Activated naive CD4-positive, alpha-beta T cell treated with anti-CD3 and anti-CD28 coated beads for 36 hours (primary cell): ENCODE measurements at regions of chr14 and their contacts with region 1.

Region 1: DNA sequence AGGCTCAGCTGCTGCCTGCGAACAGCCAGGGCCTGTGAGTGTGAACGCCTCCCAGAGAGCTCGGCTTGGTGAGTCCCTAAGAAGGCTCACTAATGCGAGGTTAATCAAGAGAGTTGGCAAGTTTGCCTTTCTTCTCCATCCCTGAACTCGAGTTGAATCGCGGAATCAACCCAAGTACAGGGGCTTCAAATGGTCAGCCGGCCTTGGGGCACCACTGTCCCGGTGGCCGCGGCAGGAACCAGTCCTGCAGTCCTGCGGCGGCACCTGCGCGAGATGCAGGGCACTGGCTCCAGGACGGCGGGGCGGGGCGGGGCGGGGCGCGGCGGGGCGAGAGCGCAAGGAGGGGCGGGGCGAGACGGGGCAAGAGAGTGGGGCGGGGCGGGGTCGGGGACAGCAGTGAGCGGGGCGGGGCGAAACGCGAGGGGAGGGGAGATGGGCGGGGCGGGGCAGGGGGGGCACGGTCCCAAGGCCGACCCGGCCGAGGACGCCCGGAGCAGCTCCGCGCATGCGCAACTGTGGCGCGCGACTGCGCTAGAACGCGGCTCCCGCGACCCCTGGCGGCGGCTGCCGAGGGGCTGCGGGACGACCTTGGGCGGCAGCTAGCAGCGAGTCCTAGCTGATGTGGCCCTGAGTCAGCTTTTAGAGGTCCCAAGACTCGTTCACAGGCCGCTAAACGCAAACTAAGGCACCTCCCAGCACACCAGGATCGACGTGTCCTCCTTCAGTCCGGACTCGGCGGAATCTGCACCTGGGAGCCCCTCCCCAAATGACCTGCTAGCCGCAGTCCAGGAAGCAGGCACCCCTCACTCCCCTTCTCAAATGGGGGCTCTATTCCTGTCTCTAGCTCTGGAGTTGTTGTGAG is 58.0 kb downstream of the TTC7B start:
- DNase-seq: peak; percentile 92
- H3K4me3 Mint-ChIP-seq: peak overlapping the region; percentile 76
- H3K27ac Mint-ChIP-seq: peak overlapping the region; percentile 80
- H3K4me1 Mint-ChIP-seq: peaks cover 14% of the 10 kb centered on the region
- H3K27me3 Mint-ChIP-seq: peaks cover 2% of the 10 kb centered on the region

Region 2: DNA sequence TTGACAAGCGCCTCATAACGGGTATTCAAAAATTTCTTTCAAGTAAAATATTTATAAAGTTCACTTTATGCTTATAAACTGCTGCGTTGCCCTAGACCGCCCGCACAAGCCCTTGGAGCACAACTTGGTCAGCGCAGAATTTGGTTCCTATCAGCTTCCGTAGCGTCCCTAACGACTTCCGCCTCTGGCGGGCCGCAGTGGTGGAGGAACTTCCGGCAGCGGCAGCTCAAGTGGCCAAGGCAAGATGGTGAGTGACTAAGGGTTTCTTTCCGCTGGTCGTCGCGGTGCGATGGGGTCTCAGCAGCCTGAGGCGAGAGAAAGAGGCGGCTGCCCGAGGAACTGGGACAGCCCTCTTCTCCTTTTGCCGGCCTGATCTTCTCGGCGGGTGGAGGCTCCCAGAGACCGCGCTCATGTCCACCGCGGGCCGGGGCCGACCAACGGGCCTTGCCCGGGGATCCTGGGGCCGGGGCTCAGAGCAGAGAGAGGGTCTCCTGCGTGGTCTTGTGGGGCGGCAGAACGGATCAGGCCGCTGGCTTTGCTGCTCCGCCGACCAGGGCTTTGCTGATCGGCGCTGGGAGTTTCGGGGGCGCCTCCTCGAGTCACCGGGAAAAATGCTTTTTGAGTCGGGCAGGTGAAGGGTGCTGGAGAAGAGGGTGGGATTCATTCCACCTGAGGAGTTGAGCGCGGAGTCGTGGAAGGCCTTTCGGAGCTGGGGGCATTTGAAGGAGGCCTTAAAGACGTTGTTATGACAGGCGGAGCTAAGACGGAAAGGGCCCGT is 501.7 kb before region 1 on chr14 and contains the start of gene PSMC1:
- CTCF ChIA-PET with region 1: no interaction called
- intact Hi-C with region 1: loop called (anchors 1 kb)
- DNase-seq: peak; percentile 96
- H3K4me3 Mint-ChIP-seq: peak within 1 kb of the TSS; percentile 98
- H3K27ac Mint-ChIP-seq: peak within 1 kb of the TSS; percentile 93
- H3K4me1 Mint-ChIP-seq: peaks cover 32% of the 10 kb centered on the region
- H3K27me3 Mint-ChIP-seq: peaks cover 3% of the 10 kb centered on the region
- total RNA-seq, gene PSMC1: 102 to 105 TPM

Region 3: GRCh38 chr14:90518941-90519256 is 239.4 kb before region 1 on chr14:
- CTCF ChIA-PET with region 1: interaction called, 3 read pairs
- intact Hi-C with region 1: loop called (anchors 5 kb)
- DNase-seq: peak; percentile 71
- H3K4me3 Mint-ChIP-seq: no peak overlapping the region
- H3K27ac Mint-ChIP-seq: no peak overlapping the region
- H3K4me1 Mint-ChIP-seq: no peaks in the 10 kb centered on the region
- H3K27me3 Mint-ChIP-seq: no peaks in the 10 kb centered on the region

Region 4: GRCh38 chr14:90714811-90715210 is 43.4 kb before region 1 on chr14:
- CTCF ChIA-PET with region 1: no interaction called
- intact Hi-C with region 1: no loop called
- DNase-seq: no peak
- H3K4me3 Mint-ChIP-seq: no peak overlapping the region
- H3K27ac Mint-ChIP-seq: no peak overlapping the region
- H3K4me1 Mint-ChIP-seq: no peaks in the 10 kb centered on the region
- H3K27me3 Mint-ChIP-seq: no peaks in the 10 kb centered on the region

Region 5: DNA sequence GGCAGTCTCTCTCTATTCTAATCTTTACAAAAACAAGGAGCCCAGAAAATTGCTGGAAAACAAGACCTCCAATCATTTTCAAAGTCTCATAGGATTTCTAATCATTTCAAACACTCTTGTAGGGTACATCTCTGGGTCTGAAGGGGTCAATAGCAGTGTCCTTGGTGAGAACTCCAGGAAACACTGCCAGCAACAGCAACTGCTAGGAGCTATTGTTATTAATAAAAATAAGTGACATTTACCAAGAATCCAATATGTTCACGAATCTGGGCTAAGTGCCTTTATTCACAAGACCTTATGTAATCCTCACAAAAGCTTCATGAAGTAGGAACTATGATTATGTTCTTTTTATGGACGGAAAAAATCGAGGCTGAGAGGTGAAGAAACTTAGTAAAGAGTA is 14.8 kb before region 1 on chr14:
- CTCF ChIA-PET with region 1: interaction called, 14 read pairs
- intact Hi-C with region 1: no loop called
- DNase-seq: no peak
- H3K4me3 Mint-ChIP-seq: no peak overlapping the region
- H3K27ac Mint-ChIP-seq: no peak overlapping the region
- H3K4me1 Mint-ChIP-seq: no peaks in the 10 kb centered on the region
- H3K27me3 Mint-ChIP-seq: no peaks in the 10 kb centered on the region

Region 6: GRCh38 chr14:90795746-90796145 is 37.5 kb after region 1 on chr14:
- CTCF ChIA-PET with region 1: interaction called, 13 read pairs
- intact Hi-C with region 1: no loop called
- DNase-seq: no peak
- H3K4me3 Mint-ChIP-seq: no peak overlapping the region
- H3K27ac Mint-ChIP-seq: no peak overlapping the region
- H3K4me1 Mint-ChIP-seq: no peaks in the 10 kb centered on the region
- H3K27me3 Mint-ChIP-seq: no peaks in the 10 kb centered on the region